PC-9 (cell line): ENCODE measurements at regions of chr1 and their contacts with region 1.

Region 1: GRCh38 chr1:45303582-45304310 is 22.9 kb upstream of the HPDL start:
- DNase-seq: peak; percentile 89 to 96
- H3K4me3 ChIP-seq: peak overlapping the region; percentile 60
- H3K27ac ChIP-seq: peak overlapping the region; percentile 72
- H3K4me1 ChIP-seq: peaks cover 10% of the 10 kb centered on the region
- H3K27me3 ChIP-seq: no peaks in the 10 kb centered on the region
- CTCF ChIP-seq: peak; percentile 69

Region 2: GRCh38 chr1:43991476-43992231 is 1312.1 kb before region 1 on chr1 and contains the start of gene CCDC24:
- CTCF ChIA-PET with region 1: interaction called, 13 read pairs
- POLR2A ChIA-PET with region 1: interaction called, 20 read pairs
- intact Hi-C with region 1: no loop called
- DNase-seq: peak; percentile 85 to 96
- H3K4me3 ChIP-seq: peak within 1 kb of the TSS; percentile 59
- H3K27ac ChIP-seq: peak within 1 kb of the TSS; percentile 86
- H3K4me1 ChIP-seq: peaks cover 25% of the 10 kb centered on the region
- H3K27me3 ChIP-seq: no peaks in the 10 kb centered on the region
- CTCF ChIP-seq: no peak
- total RNA-seq, gene CCDC24: 47.9 and 56.5 TPM in 2 replicates

Region 3: GRCh38 chr1:44792783-44793714 is 510.7 kb before region 1 on chr1:
- CTCF ChIA-PET with region 1: interaction called, 4 read pairs
- POLR2A ChIA-PET with region 1: interaction called, 26 read pairs
- intact Hi-C with region 1: loop called (anchors 2 kb)
- DNase-seq: no peak
- H3K4me3 ChIP-seq: no peak overlapping the region
- H3K27ac ChIP-seq: peak overlapping the region; percentile 36; the same call in 1 of the 2 replicates
- H3K4me1 ChIP-seq: peaks cover 13% of the 10 kb centered on the region
- H3K27me3 ChIP-seq: no peaks in the 10 kb centered on the region
- CTCF ChIP-seq: no peak

Region 4: DNA sequence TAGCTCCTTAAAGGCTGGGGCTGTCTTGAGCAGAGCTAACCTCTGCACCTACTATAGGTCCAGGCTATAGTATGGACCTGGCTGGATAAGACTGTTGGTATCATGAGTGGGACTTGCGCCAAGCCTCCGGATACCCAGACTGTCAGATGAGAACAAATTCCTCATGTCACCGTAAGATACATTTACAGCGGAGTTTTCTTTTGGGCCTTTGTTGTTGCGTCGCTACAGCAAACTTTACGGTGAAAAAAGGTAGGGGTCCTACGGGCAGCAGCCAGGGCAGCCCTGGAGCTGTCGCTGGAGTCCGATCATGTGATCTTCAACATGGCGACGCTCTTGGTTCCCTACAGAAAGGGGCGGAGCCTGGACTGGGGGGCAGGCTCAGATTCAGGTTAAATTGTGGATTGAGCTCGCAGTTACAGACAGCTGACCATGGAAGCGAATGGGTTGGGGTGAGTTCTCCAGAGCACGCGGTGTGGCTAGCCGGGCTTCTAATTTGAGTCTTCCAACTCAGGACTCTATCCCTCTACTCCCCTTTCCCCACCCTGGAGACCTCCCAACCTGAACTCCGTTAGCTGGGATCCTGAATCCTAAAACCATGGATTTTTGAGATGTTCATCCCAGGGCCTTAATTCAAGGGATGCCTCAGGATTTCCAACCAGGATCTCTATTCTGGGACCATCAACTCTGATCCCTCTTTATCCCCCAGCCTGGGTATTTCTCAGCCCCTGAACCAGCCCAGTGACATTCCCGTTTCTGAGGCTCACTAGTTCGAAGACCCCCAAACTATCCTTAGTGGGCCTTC is 291.7 kb before region 1 on chr1 and contains the start of gene UROD:
- CTCF ChIA-PET with region 1: interaction called, 53 read pairs
- POLR2A ChIA-PET with region 1: interaction called, 26 read pairs
- intact Hi-C with region 1: loop called (anchors 1 kb)
- DNase-seq: peak; percentile 91 to 94
- H3K4me3 ChIP-seq: peak within 1 kb of the TSS; percentile 75
- H3K27ac ChIP-seq: peak within 1 kb of the TSS; percentile 41
- H3K4me1 ChIP-seq: peaks cover 20% of the 10 kb centered on the region
- H3K27me3 ChIP-seq: no peaks in the 10 kb centered on the region
- CTCF ChIP-seq: no peak
- total RNA-seq, gene UROD: 77.4 and 81.1 TPM in 2 replicates

Region 5: DNA sequence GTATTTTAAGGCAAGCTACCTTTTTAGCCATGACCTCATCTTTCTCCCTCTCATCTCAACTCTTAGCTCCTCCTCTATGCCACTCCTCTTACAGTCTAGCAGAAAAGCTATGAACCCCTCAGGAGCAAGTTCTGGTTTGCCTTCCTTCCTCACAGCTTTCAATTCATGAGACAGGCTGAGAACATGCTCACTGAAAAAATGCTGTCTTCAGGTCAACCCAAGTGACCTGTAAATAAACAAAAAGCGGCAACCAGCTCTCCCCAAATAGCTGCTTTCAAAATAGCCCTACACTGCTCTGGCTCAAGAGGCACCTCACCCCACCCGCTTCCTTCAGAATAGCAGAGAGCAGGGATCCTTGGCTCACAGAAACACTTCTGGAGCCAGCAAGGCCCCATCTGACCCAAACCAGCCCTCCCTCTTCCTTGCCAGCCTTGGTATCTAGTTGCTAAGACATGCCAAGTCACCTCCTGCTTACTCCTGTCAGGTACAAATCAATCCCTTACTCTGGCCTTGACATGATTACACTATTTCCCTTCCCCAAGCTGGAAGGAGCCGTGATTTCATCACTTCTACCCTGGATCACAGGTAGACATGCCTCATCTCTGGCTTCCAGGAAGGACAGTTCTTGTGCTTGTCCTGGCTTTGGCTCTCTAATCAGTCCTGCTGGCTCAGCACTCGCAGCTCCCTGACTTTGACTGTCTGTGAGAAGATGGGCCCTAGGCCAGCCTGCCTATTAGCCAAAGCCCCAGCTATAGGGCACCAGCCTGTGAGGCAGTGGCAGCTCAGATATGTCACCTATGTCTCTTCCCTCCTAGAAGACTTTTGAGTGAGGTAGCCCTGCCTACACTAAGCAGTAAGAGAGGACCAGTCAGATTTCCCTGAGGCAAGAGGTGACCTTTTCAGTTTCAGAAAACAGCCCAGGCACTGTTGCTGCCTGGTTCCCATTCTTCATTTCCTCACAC is 45.3 kb after region 1 on chr1:
- CTCF ChIA-PET with region 1: interaction called, 19 read pairs
- POLR2A ChIA-PET with region 1: no interaction called
- intact Hi-C with region 1: no loop called
- DNase-seq: peak in 1 of 2 experiments; percentile 50
- H3K4me3 ChIP-seq: no peak overlapping the region
- H3K27ac ChIP-seq: peak overlapping the region; percentile 4; the same call in 1 of the 2 replicates
- H3K4me1 ChIP-seq: peaks cover 22% of the 10 kb centered on the region
- H3K27me3 ChIP-seq: no peaks in the 10 kb centered on the region
- CTCF ChIP-seq: no peak

Region 6: DNA sequence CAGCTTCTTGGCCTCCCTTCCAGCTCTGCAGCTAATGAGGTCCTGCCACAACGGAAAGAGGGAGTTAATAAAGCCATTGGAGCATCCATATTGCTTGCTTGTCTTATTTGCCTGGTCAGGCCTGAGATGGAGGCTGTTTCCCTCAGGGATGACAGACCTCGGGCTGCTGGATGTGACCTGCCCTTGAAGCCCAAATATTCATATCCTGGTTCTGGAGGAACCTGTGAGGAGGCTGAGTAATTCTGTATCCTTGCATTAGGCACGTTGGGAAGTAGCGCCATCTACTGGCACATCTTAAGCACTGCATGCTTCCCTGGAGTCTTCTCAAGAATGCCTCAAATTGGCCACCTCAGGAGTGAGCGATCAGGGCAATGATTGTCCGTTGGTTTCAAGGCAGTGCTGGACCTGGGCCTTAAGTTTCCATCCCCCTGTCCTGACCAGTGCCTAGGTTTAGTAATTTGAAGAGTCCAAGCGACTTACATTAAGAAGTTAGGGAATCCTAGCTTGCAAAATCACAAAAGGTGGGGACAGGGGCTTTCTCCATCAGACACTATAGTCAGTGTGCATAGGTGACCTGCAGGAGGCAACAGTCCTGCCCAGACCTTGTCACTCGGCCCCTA is 266.3 kb after region 1 on chr1:
- CTCF ChIA-PET with region 1: no interaction called
- POLR2A ChIA-PET with region 1: no interaction called
- intact Hi-C with region 1: loop called (anchors 1 kb)
- DNase-seq: peak; percentile 62 to 64
- H3K4me3 ChIP-seq: no peak overlapping the region
- H3K27ac ChIP-seq: no peak overlapping the region
- H3K4me1 ChIP-seq: peaks cover 3% of the 10 kb centered on the region; the same call in 1 of the 2 replicates
- H3K27me3 ChIP-seq: no peaks in the 10 kb centered on the region
- CTCF ChIP-seq: peak; percentile 99